PC-9 (cell line): ENCODE measurements at regions of chr22 and their contacts with region 1.

Region 1: DNA sequence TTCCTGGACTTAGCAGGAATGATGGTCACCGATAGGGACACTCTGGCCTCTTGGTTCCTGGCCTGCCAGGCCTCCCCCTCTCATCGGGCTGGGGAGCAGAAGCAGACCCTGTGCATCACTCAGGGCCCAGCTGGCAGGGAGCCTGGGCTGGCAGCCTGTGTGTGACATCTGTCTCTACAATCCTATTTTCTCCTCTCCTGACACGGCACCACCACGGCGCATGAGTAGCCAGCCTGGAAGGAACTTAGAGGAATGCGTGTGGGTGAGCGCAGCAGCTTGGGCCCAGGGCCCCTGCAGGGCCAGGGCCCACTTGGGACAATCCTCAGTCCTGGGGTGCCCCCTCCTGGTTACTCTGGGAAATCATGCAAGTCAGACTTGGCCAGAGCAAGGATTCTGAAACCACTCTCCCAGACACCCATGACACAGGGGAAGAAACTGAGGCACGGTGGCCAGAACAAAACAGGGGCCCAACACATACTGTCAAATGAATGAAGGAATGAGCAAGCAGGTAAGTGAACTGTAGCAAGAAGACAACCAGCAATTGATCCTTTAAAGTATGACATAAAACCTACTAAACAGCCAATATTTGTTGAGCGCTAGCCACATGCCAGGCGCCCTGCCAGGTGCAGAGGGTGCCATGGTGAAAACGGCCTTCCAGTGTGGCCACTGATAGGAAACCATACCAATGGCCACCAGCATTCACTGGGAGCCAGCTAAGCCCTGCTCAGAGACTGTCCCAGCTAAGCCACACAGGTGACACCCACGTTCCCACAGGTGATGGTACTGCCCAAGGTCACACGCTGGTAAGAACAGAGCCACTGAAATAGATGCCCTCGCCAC is 13.3 kb downstream of the RSPH14 start:
- DNase-seq: peak in 1 of 2 experiments; percentile 53
- H3K4me3 ChIP-seq: no peak overlapping the region
- H3K27ac ChIP-seq: no peak overlapping the region
- H3K4me1 ChIP-seq: no peaks in the 10 kb centered on the region
- H3K27me3 ChIP-seq: peaks cover 26% of the 10 kb centered on the region
- CTCF ChIP-seq: peak; percentile 81

Region 2: GRCh38 chr22:22587577-22588188 is 540.8 kb before region 1 on chr22:
- CTCF ChIA-PET with region 1: no interaction called
- POLR2A ChIA-PET with region 1: no interaction called
- intact Hi-C with region 1: loop called (anchors 10 kb)
- DNase-seq: no peak
- H3K4me3 ChIP-seq: no peak overlapping the region
- H3K27ac ChIP-seq: no peak overlapping the region
- H3K4me1 ChIP-seq: no peaks in the 10 kb centered on the region
- H3K27me3 ChIP-seq: peaks cover 20% of the 10 kb centered on the region
- CTCF ChIP-seq: no peak

Region 3: GRCh38 chr22:23036684-23037428 is 91.6 kb before region 1 on chr22:
- CTCF ChIA-PET with region 1: no interaction called
- POLR2A ChIA-PET with region 1: no interaction called
- intact Hi-C with region 1: no loop called
- DNase-seq: no peak
- H3K4me3 ChIP-seq: no peak overlapping the region
- H3K27ac ChIP-seq: no peak overlapping the region
- H3K4me1 ChIP-seq: no peaks in the 10 kb centered on the region
- H3K27me3 ChIP-seq: peaks cover 82% of the 10 kb centered on the region
- CTCF ChIP-seq: no peak

Region 4: DNA sequence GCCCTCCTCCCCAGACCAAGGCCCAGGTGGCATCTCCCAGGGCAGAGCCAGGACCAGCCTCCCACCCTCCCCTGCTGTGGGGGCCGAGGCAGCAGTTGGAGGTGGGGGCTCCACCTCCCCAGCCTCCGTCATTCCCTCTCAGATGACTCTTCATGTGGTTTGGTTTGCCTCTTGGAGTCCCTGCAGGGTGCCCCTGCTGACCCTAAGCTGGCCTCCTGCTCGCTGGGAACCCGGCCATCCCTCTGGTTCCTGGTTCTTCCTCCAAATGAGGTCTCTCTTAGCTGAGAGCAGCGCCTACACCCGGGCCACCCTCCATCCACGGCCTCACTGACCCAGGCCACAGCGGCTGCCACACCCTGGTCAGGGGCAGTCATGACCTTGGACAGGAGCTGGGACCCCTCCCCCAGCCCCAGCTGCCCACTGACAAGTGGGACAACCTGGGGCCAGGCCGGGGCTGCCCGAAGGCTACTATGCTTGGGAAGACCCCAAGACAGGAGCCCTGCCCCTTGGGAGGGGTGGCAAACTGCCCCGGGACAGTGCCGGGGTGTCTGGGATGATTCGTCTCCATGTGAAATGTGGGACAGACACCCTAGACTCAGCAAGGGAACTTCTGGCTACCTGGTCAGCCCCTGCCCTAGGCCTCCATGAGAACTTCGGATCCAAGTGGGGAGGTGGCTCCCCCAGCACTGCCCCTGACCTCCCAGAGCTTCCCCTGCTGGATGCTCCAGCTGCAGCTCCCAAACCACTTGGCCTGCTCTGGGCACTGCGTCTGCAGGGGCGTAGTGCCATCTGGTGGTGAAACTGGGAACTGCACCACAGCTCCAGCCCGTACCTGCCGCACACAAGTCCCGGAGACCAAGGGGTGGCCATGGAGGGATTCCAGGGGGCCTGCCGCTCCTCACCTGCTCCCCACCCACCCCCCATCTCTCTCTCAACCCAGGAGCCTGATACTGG is 257.1 kb after region 1 on chr22:
- CTCF ChIA-PET with region 1: no interaction called
- POLR2A ChIA-PET with region 1: no interaction called
- intact Hi-C with region 1: loop called (anchors 5 kb)
- DNase-seq: peak; percentile 41 to 75
- H3K4me3 ChIP-seq: no peak overlapping the region
- H3K27ac ChIP-seq: no peak overlapping the region
- H3K4me1 ChIP-seq: no peaks in the 10 kb centered on the region
- H3K27me3 ChIP-seq: peaks cover 29% of the 10 kb centered on the region
- CTCF ChIP-seq: peak; percentile 98